GM10248 (cell line): ENCODE measurements at regions of chr2 and their contacts with region 1.

Region 1: DNA sequence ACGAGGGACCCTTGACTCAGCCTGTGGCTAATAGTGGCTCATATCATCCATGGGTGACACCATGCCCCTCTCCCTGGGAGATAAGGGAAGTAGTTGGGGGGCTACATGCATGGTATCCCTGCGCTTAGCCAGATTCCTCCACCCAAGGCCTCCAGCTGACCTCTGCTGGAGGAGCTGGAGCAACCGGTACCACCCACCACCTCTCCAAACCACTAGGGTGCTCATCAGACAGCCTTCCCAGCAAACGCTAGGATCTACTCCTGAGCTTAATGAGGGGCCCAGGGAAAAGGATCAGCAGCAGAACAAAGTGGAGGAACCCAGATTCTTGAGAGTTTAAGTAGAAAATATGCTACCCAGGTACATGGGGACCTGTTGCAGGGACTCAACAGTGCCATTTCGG is 75.9 kb upstream of the CAPN13 start:
- DNase-seq: no peak
- CTCF ChIP-seq: no peak

Region 2: DNA sequence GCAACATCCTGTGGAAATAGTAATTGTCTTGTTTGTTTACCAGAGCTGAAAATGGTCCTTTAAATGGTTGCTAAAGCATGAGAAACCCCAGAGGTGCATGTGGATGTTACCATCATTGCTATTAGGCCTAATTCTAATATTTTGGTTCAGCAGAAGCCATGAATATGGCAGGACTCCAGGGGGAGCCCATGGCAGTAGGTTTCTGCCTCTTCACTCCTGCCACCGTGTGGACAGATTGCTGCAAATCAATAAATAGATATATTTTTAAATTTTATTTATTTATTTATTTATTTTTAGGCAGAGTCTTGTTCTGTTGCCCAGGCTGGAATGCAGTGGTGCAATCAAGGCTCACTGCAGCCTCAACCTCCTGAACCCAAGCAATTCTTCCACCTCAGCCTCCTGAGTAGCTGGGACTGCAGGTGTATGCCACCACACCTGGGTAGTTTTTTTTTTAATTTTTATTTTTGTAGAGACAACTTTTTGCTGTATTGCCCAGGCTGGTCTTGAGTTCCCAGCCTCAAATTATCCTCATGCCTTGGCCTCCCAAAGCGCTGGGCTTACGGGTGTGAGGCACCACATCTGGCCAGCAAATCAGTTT is 21.0 kb before region 1 on chr2:
- CTCF ChIA-PET with region 1: interaction called, 10 read pairs
- POLR2A ChIA-PET with region 1: no interaction called
- DNase-seq: peak; percentile 57
- CTCF ChIP-seq: peak; percentile 78

Region 3: DNA sequence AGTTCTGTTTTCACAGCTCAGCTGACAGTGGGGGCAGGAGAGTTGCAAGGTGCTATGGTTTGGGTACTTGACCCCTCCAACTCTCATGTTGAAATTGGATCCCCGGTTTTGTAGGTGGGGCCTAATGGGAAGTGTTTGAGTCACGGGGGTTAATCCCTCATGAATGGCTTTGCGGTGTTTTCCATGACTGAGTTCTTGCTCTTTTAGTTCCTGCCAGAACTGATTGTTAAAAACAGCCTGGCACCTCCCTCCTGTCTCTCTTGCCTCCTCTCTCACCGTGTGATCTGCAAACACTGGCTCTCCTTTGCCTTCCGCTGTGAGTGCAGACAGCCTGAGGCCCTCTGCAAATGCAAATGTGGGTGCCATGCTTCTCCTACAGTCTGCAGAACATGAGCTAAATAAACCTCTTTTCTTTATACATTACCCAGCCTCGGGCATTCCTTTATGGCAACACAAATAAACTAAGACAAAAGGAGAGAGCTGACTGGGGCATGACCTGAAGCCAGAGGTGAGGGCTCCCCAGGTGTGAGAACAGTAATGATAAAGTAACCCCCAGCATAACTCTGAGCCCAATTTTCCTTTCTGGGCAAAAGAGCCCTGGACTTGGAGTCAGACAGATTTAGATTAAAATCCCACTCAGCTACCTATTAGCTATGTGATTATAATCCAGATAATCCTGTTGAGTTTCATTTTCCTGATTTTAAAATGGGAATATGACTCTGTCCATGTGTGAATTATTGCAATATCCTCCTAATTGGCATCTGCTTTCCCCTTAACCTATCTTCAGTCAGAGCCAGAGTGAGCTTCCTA is 11.0 kb before region 1 on chr2:
- CTCF ChIA-PET with region 1: no interaction called
- POLR2A ChIA-PET with region 1: no interaction called
- DNase-seq: no peak
- CTCF ChIP-seq: no peak

Region 4: GRCh38 chr2:30947686-30948085 is 64.5 kb after region 1 on chr2:
- CTCF ChIA-PET with region 1: no interaction called
- POLR2A ChIA-PET with region 1: no interaction called
- DNase-seq: no peak
- CTCF ChIP-seq: no peak